Panc1 (cell line): ENCODE measurements at regions of chr5 and their contacts with region 1.

Region 1: DNA sequence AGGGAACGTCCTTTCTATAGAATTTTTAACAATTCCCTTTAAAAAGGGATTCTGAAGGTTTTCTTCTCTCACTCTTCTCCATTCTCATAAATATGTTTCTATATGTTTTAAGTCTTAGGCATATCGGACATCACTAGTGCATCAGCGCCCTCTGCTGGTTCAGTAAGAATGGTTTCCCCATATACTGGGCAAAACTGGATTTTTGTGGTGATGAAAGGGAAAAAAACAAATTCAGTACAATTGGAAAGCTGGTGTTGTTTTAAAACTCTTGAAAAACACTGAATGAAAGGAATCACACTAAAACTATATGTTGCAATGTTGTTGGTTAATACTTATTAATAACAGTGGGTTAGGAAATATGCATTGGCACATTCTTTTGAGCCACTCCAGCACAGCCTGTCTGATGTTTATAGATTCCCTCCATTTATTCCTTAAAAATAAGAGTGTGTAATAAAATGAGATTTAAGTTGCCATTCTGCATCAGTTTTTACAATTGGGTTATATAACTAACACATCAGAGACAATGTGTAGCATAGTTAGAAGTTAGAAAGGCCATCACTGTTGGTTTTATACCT is 15.8 kb downstream of the CWC27 start:
- DNase-seq: no peak
- ATAC-seq: peak; percentile 84
- H3K4me3 ChIP-seq: no peak overlapping the region
- H3K27ac ChIP-seq: no peak overlapping the region
- H3K4me1 ChIP-seq: no peaks in the 10 kb centered on the region
- H3K27me3 ChIP-seq: no peaks in the 10 kb centered on the region
- CTCF ChIP-seq: peak; percentile 77; the same call in 1 of the 2 replicates

Region 2: DNA sequence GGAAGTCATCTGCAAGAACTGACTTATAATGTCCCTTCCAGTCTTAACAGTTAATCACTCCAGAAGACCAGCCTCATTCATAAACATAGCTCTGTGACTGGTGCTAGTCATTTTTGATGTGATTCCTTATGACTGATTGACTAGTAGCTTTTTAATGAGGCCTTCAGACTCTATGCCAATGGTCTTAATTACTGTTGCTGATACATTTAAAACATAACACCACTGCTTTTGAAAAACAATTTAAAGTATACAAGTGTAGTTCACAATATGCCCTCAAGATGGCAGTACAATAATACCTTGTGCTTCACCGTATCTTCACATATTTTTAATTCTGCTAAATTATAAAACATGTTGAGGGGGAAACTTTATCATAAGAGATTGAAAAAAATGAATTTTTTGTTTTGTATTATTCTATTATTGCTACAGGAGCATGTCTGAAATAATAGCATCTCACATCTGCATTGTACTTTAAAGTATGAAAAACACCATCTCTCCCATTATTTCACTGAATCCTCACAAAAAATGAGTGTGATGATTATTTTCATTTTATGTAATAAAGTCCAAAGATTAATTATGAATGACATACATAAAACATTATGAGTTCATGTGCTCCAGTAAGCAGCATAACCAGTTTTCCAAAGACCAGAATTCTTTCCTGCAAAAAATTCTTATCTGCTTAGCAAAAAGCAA is 149.4 kb before region 1 on chr5:
- CTCF ChIA-PET with region 1: no interaction called
- POLR2A ChIA-PET with region 1: no interaction called
- in situ Hi-C with region 1: no loop called
- intact Hi-C with region 1: loop called (anchors 1 kb)
- DNase-seq: peak; percentile 28
- ATAC-seq: no peak
- H3K4me3 ChIP-seq: no peak overlapping the region
- H3K27ac ChIP-seq: no peak overlapping the region
- H3K4me1 ChIP-seq: no peaks in the 10 kb centered on the region
- H3K27me3 ChIP-seq: peaks cover 4% of the 10 kb centered on the region; the same call in 1 of the 2 replicates
- CTCF ChIP-seq: peak; percentile 72; the same call in 1 of the 2 replicates

Region 3: DNA sequence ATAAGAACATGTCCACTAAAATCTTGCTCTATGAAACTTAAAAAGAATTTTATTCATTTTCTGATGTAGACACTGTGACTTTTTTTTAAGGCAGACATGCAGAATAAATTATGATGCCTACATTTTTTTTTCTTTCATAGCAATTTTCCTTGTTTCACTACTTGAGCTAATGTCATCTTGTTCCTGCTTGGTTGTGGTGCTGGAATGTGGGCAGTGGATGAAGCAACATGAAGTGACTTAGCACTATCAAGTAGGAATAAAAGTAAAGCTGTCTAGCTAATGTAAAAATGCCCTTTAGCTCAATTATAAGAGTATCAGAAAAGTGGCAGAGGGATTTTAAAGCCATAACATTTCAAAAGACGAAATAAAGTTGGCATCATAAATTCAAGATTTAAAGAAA is 506.1 kb after region 1 on chr5:
- CTCF ChIA-PET with region 1: no interaction called
- POLR2A ChIA-PET with region 1: no interaction called
- in situ Hi-C with region 1: no loop called
- intact Hi-C with region 1: no loop called
- DNase-seq: no peak
- ATAC-seq: no peak
- H3K4me3 ChIP-seq: no peak overlapping the region
- H3K27ac ChIP-seq: no peak overlapping the region
- H3K4me1 ChIP-seq: no peaks in the 10 kb centered on the region
- H3K27me3 ChIP-seq: no peaks in the 10 kb centered on the region
- CTCF ChIP-seq: no peak